ENCODE measurements at regions of chr1 and their contacts with region 1.

Region 1: GRCh38 chr1:25743826-25744581 is 56.0 kb upstream of the SELENON start:
- DNase-seq: peak; percentile 86

Region 2: DNA sequence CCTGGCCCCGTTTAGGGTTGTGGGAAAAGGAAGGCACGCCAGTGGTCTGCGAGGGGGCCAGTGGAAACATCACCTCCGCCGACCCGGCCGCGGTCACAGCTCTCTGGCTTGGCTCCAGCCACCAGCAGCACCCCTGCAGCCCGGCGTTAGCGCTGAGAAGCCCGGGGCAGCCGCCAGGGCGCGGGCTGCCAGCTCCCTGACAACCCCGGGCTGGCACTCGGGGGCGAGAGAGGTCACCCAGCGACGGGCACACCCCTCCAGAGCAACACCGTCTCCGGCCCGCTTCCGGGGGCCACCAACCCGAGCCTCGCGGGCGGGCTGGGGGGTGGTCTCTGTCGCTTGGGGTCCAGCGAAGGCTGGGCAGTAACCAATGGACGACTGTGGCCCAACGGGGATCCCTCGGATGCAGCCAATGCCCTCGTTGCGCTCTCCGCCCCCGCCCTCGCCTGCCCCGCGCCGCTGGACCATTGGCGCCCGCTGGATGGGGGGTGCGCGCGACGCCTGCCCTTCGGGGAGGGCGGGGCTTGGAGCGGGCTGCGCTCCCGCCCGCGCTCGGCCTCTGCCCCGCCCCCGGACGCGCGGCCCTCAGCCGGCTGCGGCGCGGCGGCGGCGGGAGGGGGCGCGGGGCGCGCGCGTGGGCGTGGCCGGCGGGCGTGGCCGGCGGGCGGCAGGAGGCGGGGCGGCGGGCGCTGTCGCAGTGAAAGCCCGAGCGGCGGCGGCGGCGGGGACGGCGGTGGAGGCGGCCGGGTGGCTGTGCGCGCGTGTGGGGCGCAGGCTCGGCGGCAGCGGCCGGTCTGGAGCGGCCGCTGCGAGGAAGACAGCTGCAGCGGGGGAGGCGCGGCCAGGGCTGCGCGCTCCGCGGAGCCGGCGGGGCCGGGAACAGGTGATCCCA is 127.7 kb before region 1 on chr1 and contains the start of gene MAN1C1:
- intact Hi-C with region 1: loop called in 1 of 2 experiments (anchors 5 kb)
- DNase-seq: peak; percentile 94
- total RNA-seq, gene MAN1C1: 15.0 to 29.4 TPM

Region 3: GRCh38 chr1:25707280-25708016 is 36.6 kb before region 1 on chr1:
- intact Hi-C with region 1: loop called (anchors 5 kb)
- DNase-seq: peak; percentile 11

Region 4: GRCh38 chr1:26094076-26094669 is 350.2 kb after region 1 on chr1:
- intact Hi-C with region 1: no loop called
- DNase-seq: no peak

Region 5: GRCh38 chr1:26378088-26378878 is 634.3 kb after region 1 on chr1:
- intact Hi-C with region 1: loop called in 1 of 2 experiments (anchors 5 kb)
- DNase-seq: no peak